Naive thymus-derived CD4-positive, alpha-beta T cell (primary cell): ENCODE measurements at regions of chr1 and their contacts with region 1.

Region 1: DNA sequence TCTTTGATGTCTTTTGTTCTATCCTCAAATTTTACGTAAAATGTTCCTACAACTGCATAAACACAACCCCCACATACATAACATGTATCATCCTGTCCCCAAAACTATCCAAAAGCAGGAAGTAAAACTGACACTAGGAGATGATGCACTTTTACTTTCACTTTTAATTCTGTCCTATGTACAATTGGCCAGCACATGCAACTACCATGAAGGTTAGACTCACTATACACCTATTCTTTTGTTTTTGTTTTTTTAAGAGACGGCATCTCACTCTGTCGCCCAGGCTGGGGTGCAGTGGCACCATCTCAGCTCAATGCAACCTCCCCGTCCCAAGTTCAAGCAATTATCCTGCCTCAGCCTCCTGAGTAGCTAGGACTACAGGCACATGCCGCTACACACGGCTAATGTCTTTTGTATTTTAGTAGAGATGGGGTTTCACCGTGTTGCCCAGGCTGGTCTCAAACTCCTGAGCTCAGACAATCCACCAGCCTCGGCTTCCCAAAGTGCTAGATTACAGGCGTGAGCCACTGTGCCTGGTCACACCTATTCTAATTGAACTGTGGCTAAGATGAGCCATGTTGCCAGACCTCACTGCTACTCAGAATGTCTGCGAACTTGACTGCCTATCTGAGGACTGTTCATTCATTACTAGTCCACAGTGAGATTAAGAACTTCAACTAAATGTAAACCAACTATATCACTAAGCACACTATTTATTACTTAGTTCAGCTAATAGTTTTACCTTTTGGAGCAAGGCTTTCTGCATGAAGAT is 48.0 kb downstream of the TOR3A start:
- DNase-seq: peak in 8 of 9 donors; percentile 28 to 83 (median 72)
- ATAC-seq: peak; percentile 95
- H3K4me3 ChIP-seq: peak overlapping the region; percentile 38
- H3K4me3 Mint-ChIP-seq: peak overlapping the region; percentile 63 to 93 (median 80)
- H3K27ac ChIP-seq: peak overlapping the region; percentile 79
- H3K27ac Mint-ChIP-seq: peak overlapping the region; percentile 87 to 96 (median 94)
- H3K4me1 ChIP-seq: peaks cover 4 to 17% of the 10 kb centered on the region in 2 donors
- H3K4me1 Mint-ChIP-seq: peaks cover 3 to 33% (median 22%) of the 10 kb centered on the region in 7 donors
- H3K27me3 ChIP-seq: no peaks in the 10 kb centered on the region
- H3K27me3 Mint-ChIP-seq: no peaks in the 10 kb centered on the region

Region 2: GRCh38 chr1:177146499-177146898 is 1983.4 kb before region 1 on chr1:
- CTCF ChIA-PET with region 1: no interaction called
- POLR2A ChIA-PET with region 1: no interaction called
- intact Hi-C with region 1: no loop called
- DNase-seq: no peak
- ATAC-seq: no peak
- H3K4me3 ChIP-seq: no peak overlapping the region
- H3K4me3 Mint-ChIP-seq: no peak overlapping the region
- H3K27ac ChIP-seq: no peak overlapping the region
- H3K27ac Mint-ChIP-seq: no peak overlapping the region
- H3K4me1 ChIP-seq: no peaks in the 10 kb centered on the region
- H3K4me1 Mint-ChIP-seq: no peaks in the 10 kb centered on the region
- H3K27me3 ChIP-seq: no peaks in the 10 kb centered on the region
- H3K27me3 Mint-ChIP-seq: peaks cover 0 to under 1% (median 0%) of the 10 kb centered on the region in 5 donors

Region 3: DNA sequence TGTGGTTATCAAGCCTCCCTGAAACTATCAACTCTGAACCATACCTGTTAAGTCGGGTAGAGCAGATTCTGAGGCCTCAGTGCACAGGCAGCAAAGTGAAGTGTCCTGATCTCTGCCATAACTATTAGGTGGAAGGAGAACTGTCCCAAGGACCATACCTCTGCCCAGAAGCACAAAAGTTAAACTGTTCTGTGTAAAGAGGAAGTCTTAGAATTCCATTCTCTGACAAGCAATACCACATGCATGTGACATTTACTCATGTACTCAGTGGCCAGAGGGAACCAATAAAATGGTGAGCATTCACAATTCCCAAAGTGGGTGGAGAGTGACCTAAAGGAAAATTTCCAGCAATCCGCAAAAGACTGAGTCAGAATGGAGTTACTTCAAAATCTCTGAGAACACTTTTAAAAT is 13.0 kb after region 1 on chr1:
- CTCF ChIA-PET with region 1: interaction called, 5 read pairs
- POLR2A ChIA-PET with region 1: interaction called, 4 read pairs
- intact Hi-C with region 1: loop called (anchors 1 to 2 kb)
- DNase-seq: no peak
- ATAC-seq: peak; percentile 56
- H3K4me3 ChIP-seq: no peak overlapping the region
- H3K4me3 Mint-ChIP-seq: peak overlapping the region in 9 of 10 donors; percentile 3 to 61 (median 47)
- H3K27ac ChIP-seq: peak overlapping the region; percentile 49
- H3K27ac Mint-ChIP-seq: peak overlapping the region; percentile 58 to 94 (median 90)
- H3K4me1 ChIP-seq: peaks cover 12 to 20% of the 10 kb centered on the region in 2 donors
- H3K4me1 Mint-ChIP-seq: peaks cover 20 to 70% (median 55%) of the 10 kb centered on the region in 7 donors
- H3K27me3 ChIP-seq: no peaks in the 10 kb centered on the region
- H3K27me3 Mint-ChIP-seq: no peaks in the 10 kb centered on the region

Region 4: GRCh38 chr1:179175011-179175841 is 45.3 kb after region 1 on chr1:
- CTCF ChIA-PET with region 1: no interaction called
- POLR2A ChIA-PET with region 1: no interaction called
- intact Hi-C with region 1: no loop called
- DNase-seq: no peak
- ATAC-seq: peak; percentile 81
- H3K4me3 ChIP-seq: no peak overlapping the region
- H3K4me3 Mint-ChIP-seq: no peak overlapping the region
- H3K27ac ChIP-seq: no peak overlapping the region
- H3K27ac Mint-ChIP-seq: peak overlapping the region in 2 of 9 donors; percentile 24 to 47
- H3K4me1 ChIP-seq: no peaks in the 10 kb centered on the region
- H3K4me1 Mint-ChIP-seq: peaks cover 0 to 15% (median 10%) of the 10 kb centered on the region in 7 donors
- H3K27me3 ChIP-seq: no peaks in the 10 kb centered on the region
- H3K27me3 Mint-ChIP-seq: no peaks in the 10 kb centered on the region

Region 5: GRCh38 chr1:179229214-179230140 is 99.6 kb after region 1 on chr1 and contains the start of gene ABL2:
- CTCF ChIA-PET with region 1: no interaction called
- POLR2A ChIA-PET with region 1: interaction called, 3 read pairs
- intact Hi-C with region 1: loop called in 1 of 2 experiments (anchors 1 kb)
- DNase-seq: peak; percentile 20 to 73 (median 41)
- ATAC-seq: peak; percentile 77
- H3K4me3 ChIP-seq: peak within 1 kb of the TSS; percentile 66
- H3K4me3 Mint-ChIP-seq: peak within 1 kb of the TSS; percentile 85 to 97 (median 92)
- H3K27ac ChIP-seq: peak within 1 kb of the TSS; percentile 81
- H3K27ac Mint-ChIP-seq: peak within 1 kb of the TSS; percentile 81 to 95 (median 89)
- H3K4me1 ChIP-seq: peaks cover 0 to 14% of the 10 kb centered on the region in 2 donors
- H3K4me1 Mint-ChIP-seq: peaks cover 20 to 43% (median 39%) of the 10 kb centered on the region in 7 donors
- H3K27me3 ChIP-seq: no peaks in the 10 kb centered on the region
- H3K27me3 Mint-ChIP-seq: peaks cover 0 to 5% (median 0%) of the 10 kb centered on the region in 5 donors
- total RNA-seq, gene ABL2: 10.3 to 20.1 (median 18.6) TPM